Heart right ventricle (tissue), 16 donors: ENCODE measurements at regions of chr2 and their contacts with region 1.

Region 1: DNA sequence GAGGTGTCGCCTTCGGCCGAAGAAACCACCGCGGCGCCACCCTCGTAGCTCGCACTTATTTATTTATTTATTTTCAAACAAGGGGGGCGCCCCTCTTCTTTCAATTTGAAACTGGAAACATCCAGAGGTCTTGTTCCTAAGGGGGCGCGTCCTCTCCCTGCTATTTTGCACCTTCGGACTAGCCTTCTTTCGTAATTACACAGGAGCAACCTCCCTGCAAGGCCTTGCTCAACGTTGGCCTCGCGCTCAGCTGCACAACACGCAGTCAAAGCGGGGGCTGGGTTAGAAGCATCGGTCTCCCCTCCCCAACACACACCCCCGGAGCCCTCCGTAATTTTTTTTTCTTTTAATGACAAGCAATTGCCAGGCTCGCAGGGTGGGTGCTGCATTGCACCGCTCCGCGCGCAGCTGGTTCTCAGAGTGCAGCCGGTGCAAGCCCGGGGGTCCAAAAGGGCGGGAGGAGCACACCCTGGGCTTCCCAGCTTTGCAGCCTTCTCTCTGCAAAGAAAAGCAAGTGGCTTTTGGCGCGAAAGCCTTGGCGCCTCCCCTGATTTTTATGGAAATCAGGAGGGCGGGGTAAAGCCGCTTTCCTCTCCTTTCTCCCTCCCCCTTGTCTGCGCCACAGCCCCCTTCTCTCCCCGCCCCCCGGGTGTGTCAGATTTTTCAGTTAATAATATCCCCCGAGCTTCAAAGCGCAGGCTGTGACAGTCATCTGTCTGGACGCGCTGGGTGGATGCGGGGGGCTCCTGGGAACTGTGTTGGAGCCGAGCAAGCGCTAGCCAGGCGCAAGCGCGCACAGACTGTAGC is at the start of gene MYCN:
- DNase-seq: peak; percentile 27 to 65
- ATAC-seq: peak; percentile 28 to 83 (median 50)
- H3K4me3 ChIP-seq: peak within 1 kb of the TSS; percentile 40 to 75 (median 57)
- H3K27ac ChIP-seq: peak within 1 kb of the TSS in 4 of 10 donors; percentile 9 to 53 (median 38)
- H3K4me1 ChIP-seq: peaks cover 4 to 52% (median 45%) of the 10 kb centered on the region in 9 donors
- H3K27me3 ChIP-seq: peaks cover 0 to 67% (median 38%) of the 10 kb centered on the region in 7 donors
- CTCF ChIP-seq: peak in 7 of 9 donors; percentile 2 to 81 (median 77)
- total RNA-seq, gene MYCN: 0.14 to 1.4 (median 0.61) TPM

Region 2: GRCh38 chr2:16218625-16219024 is 278.6 kb after region 1 on chr2:
- intact Hi-C with region 1: loop called in 1 of 10 experiments (anchors 5 kb)
- DNase-seq: no peak
- ATAC-seq: no peak
- H3K4me3 ChIP-seq: no peak overlapping the region
- H3K27ac ChIP-seq: no peak overlapping the region
- H3K4me1 ChIP-seq: peaks cover 0 to 11% (median 4%) of the 10 kb centered on the region in 9 donors
- H3K27me3 ChIP-seq: no peaks in the 10 kb centered on the region
- CTCF ChIP-seq: peak in 7 of 9 donors; percentile 34 to 54 (median 44)

Region 3: DNA sequence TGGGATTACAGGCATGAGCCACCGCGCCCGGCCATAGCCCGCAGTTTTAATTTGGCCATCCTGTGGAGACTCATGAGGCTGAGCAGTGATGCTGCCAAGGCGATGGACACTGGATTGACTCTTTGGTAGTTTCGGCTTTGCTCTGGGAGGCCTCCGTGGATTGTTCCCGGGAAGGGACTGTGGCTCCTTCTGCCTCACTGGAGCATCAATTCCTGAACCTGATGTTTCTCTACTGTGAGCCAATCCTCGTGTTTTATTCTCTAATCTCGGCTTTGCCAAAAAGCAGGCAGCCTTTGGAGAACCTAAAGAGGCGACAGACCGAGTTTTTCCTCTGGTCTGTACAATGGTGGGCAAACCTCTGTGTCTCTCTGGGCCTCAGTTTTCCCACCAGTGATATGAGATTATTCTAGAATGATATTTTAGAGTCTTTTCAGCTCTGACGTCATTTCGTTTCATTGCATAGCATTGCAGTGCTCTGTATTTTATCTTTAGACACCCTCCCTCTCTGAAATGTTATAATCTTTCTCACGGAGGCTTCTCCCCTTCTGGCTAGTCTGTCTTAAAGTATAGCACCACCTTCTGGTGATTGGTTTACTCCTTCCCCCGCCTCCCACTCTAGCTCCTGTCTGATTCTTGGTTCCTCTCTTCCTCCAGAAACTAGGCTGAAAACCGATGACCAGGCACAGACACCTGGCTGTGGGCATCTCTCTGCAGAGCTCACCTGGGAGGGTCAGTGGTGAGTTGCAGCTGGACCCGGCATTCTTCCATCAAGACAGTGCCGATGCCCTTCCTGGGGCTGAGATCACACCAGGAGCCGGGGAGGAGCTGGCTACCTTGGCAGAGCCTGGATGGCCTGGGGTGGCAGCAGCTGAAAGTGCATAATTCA is 341.6 kb after region 1 on chr2:
- intact Hi-C with region 1: loop called in 8 of 10 experiments (anchors 1 to 10 kb)
- DNase-seq: peak in 1 of 2 donors; percentile 21
- ATAC-seq: peak in 7 of 8 donors; percentile 49 to 82 (median 70)
- H3K4me3 ChIP-seq: no peak overlapping the region
- H3K27ac ChIP-seq: no peak overlapping the region
- H3K4me1 ChIP-seq: no peaks in the 10 kb centered on the region
- H3K27me3 ChIP-seq: no peaks in the 10 kb centered on the region
- CTCF ChIP-seq: peak in 8 of 9 donors; percentile 8 to 72 (median 60)

Region 4: DNA sequence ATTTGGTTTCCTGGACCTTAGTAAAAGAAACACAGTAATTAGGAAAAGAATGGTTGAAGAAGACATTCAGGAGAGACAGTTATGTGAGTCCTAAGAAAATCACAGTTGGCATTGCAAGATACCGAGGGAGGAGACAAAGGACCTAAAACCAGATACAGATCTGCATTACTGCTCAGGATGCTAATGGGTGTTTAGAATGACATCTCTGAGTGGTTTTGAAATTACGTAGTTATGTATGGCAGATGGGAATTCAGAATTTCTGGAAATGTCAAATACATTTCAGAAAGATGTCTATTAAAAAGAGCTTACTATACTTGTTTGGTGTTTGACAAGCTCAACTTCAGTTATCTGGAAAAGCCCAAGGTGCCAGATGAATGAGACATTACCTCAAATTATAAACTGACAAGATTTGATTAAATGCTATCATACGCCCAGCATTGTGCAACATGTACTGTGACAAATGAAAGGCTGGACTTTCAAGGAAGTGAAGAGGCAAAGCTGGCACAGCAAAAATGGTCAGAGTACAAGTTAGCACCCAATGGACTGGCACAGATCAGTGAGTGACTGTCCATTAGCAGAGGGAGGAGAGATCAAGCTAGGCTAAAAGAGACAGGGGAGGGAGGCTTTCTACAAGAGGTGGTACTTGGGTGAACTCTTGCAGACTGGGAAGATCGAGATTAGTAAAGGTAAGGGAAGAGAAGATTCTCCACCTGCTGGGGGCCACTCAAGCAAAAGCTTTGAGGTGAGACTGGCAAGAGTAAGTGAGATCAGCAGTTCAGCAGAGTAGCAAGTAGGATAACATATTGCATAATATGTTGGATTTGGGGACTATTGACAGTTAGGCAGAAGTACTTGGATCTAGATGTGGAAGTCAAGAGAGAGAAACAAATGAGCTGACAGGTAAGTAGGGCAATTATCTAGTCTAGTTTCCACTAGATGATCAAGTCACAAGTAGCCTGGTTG is 556.6 kb after region 1 on chr2:
- intact Hi-C with region 1: loop called in 3 of 10 experiments (anchors 10 kb)
- DNase-seq: no peak
- ATAC-seq: no peak
- H3K4me3 ChIP-seq: no peak overlapping the region
- H3K27ac ChIP-seq: no peak overlapping the region
- H3K4me1 ChIP-seq: no peaks in the 10 kb centered on the region
- H3K27me3 ChIP-seq: peaks cover 0 to 4% (median 0%) of the 10 kb centered on the region in 7 donors
- CTCF ChIP-seq: no peak

Region 5: GRCh38 chr2:16608661-16609643 is 668.9 kb after region 1 on chr2:
- intact Hi-C with region 1: loop called in 9 of 10 experiments (anchors 2 to 10 kb)
- DNase-seq: peak; percentile 86 to 88
- ATAC-seq: peak; percentile 83 to 92 (median 88)
- H3K4me3 ChIP-seq: peak overlapping the region in 9 of 10 donors; percentile 27 to 58 (median 48)
- H3K27ac ChIP-seq: peak overlapping the region in 5 of 10 donors; percentile 7 to 46 (median 33)
- H3K4me1 ChIP-seq: peaks cover 0 to 32% (median 17%) of the 10 kb centered on the region in 9 donors
- H3K27me3 ChIP-seq: no peaks in the 10 kb centered on the region
- CTCF ChIP-seq: peak; percentile 81 to 96 (median 92)